Heart left ventricle (tissue), 16 donors: ENCODE measurements at regions of chr1 and their contacts with region 1.

Region 1: DNA sequence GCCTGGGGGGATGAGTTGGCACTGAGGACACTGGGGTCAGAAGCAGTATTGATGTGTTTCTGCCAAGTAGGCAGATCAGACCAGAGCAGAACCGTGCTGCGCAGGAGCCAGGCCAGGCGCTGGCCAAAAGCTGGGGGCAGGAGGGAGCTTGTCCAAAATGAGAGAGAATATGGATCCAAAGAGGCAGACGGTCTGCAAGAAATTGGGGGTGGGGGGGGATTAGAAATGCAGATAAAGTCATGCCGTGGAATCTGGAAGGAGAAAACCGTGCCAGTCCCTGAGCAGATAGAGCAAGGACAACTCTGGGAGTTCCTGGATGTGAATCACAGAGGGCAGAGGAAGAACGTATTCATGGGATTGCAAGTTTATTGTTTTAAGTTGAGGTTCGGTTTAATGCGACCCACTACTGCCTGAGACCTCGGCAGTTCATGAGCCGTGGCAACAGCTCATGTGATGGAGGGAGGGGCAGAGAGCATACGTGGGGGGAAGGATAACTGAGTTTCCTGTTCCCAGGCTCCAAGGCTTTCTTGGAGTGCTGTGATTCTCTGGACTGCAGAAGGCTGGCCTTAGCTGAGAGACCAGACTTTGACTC is 224.0 kb downstream of the FGGY start:
- DNase-seq: peak in 4 of 5 donors; percentile 25 to 47 (median 40)
- ATAC-seq: peak; percentile 71 to 79 (median 72)
- H3K4me3 ChIP-seq: no peak overlapping the region
- H3K27ac ChIP-seq: peak overlapping the region in 11 of 12 donors; percentile 4 to 71 (median 60)
- H3K4me1 ChIP-seq: peaks cover 0 to 24% (median 17%) of the 10 kb centered on the region in 12 donors
- H3K27me3 ChIP-seq: no peaks in the 10 kb centered on the region
- CTCF ChIP-seq: no peak
- POLR2A ChIP-seq: no peak

Region 2: DNA sequence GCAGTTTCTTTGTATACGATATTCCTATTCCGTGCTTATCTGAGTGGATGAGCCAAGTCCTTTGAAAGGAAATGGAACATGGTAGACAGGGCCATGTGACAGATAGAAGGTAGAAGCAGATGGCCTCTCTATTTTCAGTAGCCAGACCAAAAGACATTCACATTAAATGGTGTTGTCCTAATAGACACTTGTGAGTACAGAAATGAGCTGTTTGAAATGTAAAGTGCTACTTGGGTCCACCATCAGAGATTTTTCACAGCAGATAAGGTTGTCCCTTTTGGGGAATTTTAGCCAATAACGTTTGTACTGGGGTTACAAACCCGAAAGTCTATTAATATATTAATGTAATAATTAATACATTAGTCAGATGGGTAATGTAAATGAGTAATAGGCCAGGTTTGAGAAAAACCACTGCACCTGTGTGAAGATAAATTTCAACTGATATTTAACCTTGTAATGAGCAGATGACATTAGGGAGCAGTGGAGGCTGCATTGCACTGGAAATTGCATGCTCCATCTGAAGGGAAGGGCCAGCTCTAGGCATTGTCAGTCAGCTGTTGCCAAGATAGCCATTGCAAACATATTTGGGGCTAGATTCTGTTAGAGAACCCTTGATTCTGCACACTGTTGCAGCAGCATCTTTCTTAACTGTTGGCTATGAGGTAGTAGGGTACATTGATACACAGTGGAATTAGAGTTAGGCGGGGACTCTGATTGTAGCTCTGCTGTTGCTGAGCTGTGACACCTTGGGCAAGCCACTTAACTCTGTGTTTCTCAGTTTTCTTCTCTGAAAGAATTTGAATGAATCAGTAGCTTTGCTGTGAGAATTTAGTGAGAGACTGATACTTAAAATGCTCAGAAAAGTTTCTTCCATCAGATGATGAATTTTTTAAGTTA is 180.3 kb before region 1 on chr1:
- intact Hi-C with region 1: no loop called
- DNase-seq: no peak
- ATAC-seq: no peak
- H3K4me3 ChIP-seq: no peak overlapping the region
- H3K27ac ChIP-seq: no peak overlapping the region
- H3K4me1 ChIP-seq: no peaks in the 10 kb centered on the region
- H3K27me3 ChIP-seq: no peaks in the 10 kb centered on the region
- CTCF ChIP-seq: no peak
- POLR2A ChIP-seq: no peak

Region 3: DNA sequence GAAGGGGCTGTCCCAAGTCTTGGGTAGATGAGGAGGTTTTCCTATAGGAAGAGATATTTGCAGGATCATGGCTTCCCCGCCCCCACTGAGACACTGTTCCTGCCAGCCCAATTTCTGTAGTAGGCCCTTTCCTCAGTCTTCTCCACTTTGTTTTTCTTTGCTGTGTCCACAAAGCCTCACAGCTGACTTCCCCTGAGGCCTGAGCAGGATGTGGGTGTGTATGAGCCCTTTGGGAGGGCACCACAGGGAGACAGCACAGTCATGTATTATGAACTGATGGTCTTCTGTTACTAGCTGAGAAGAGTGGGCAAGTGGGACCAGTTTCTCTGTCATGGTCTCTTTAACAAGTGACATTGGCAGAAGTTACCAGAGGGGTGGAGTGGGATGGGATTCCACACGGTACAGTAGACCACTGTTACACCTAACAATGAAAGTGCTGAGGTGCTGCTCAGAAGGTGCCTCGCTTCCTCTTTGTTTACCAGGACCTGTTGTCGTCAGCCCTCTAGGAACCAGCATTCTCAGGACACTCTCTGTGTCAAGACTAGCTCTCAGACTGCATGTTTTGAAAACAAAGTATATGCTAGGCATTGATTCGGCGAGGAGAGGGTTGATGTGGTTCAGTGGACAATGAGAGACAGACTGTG is 40.0 kb after region 1 on chr1:
- intact Hi-C with region 1: no loop called
- DNase-seq: no peak
- ATAC-seq: no peak
- H3K4me3 ChIP-seq: no peak overlapping the region
- H3K27ac ChIP-seq: no peak overlapping the region
- H3K4me1 ChIP-seq: peaks cover 0 to 3% (median 0%) of the 10 kb centered on the region in 12 donors
- H3K27me3 ChIP-seq: no peaks in the 10 kb centered on the region
- CTCF ChIP-seq: no peak
- POLR2A ChIP-seq: no peak

Region 4: DNA sequence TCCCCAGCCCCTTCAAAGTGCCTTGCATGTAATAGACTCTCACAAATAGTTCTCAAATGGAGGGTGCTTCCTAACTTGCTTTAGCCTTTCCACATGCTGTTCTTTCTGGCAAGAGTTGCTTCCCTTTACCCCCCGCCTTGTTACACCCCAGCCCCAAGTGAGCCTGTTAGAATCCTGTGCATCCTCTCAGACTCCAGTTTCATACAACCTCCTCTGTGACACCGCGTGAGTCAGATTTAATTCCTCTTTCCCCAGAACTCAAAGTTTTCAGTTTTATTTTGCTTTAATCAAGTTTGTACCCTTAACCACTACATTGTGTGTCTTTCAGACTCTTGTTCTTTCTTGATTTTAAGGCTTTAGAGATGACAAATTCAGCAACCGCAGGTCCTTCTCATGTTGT is 59.3 kb after region 1 on chr1:
- intact Hi-C with region 1: loop called in 1 of 10 experiments (anchors 10 kb)
- DNase-seq: no peak
- ATAC-seq: no peak
- H3K4me3 ChIP-seq: no peak overlapping the region
- H3K27ac ChIP-seq: peak overlapping the region in 1 of 12 donors; percentile 64
- H3K4me1 ChIP-seq: peaks cover 0 to 6% (median 0%) of the 10 kb centered on the region in 12 donors
- H3K27me3 ChIP-seq: no peaks in the 10 kb centered on the region
- CTCF ChIP-seq: no peak
- POLR2A ChIP-seq: no peak

Region 5: DNA sequence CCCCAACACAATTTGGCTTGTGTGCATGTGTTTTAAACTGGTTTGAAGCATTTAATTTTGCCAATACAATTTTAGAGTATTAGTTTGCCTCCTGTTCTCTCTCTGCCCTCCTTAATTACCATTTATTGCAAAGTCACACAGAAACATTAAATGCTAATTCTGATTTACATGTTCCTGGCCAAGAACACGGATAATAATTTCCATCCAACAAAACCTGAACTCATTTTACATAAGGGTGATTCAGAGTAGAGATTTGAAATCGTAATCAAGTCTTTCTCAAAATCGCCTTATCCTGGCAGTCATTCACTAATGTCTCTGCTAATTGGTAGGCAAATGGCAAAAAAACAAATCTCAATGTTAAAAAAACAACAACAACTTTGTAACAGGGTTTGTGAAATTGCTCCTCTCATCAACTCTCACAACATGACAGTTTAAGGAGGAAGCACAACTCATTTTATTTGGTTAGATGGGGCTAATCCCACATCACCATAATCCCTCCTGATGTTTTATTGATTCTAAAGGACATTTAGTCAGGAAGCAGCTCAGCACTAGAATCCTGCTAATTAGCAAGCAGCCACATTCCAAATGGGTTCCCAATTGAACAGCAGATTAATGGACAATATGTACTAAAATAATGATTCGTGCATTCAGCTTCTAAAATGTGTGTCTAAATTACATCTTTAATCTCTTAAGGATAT is 496.7 kb after region 1 on chr1:
- intact Hi-C with region 1: no loop called
- DNase-seq: no peak
- ATAC-seq: no peak
- H3K4me3 ChIP-seq: no peak overlapping the region
- H3K27ac ChIP-seq: no peak overlapping the region
- H3K4me1 ChIP-seq: no peaks in the 10 kb centered on the region
- H3K27me3 ChIP-seq: no peaks in the 10 kb centered on the region
- CTCF ChIP-seq: no peak
- POLR2A ChIP-seq: no peak